Mammary epithelial cell (primary cell): ENCODE measurements at regions of chr19 and their contacts with region 1.

Region 1: GRCh38 chr19:55605637-55606470 is at the start of gene ZNF865:
- DNase-seq: peak; percentile 84
- H3K4me3 ChIP-seq: peak within 1 kb of the TSS; percentile 77 to 80 (median 80)
- H3K27ac ChIP-seq: peak within 1 kb of the TSS; percentile 69
- H3K4me1 ChIP-seq: peaks cover 17% of the 10 kb centered on the region
- H3K27me3 ChIP-seq: no peaks in the 10 kb centered on the region
- CTCF ChIP-seq: peak; percentile 72 to 88
- total RNA-seq, gene ZNF865: 1.5 to 8.8 TPM

Region 2: GRCh38 chr19:55467236-55468053 is 138.4 kb before region 1 on chr19:
- CTCF ChIA-PET with region 1: no interaction called
- dilution Hi-C with region 1: loop called (anchors 5 kb)
- in situ Hi-C with region 1: no loop called
- intact Hi-C with region 1: loop called (anchors 2 kb)
- DNase-seq: peak; percentile 38
- H3K4me3 ChIP-seq: no peak overlapping the region
- H3K27ac ChIP-seq: no peak overlapping the region
- H3K4me1 ChIP-seq: no peaks in the 10 kb centered on the region
- H3K27me3 ChIP-seq: no peaks in the 10 kb centered on the region
- CTCF ChIP-seq: peak; percentile 77 to 97

Region 3: GRCh38 chr19:55516878-55517620 is 88.8 kb before region 1 on chr19:
- CTCF ChIA-PET with region 1: no interaction called
- dilution Hi-C with region 1: no loop called
- in situ Hi-C with region 1: no loop called
- intact Hi-C with region 1: loop called (anchors 1 kb)
- DNase-seq: peak; percentile 82
- H3K4me3 ChIP-seq: peak overlapping the region; percentile 25 to 58 (median 27)
- H3K27ac ChIP-seq: no peak overlapping the region
- H3K4me1 ChIP-seq: no peaks in the 10 kb centered on the region
- H3K27me3 ChIP-seq: no peaks in the 10 kb centered on the region
- CTCF ChIP-seq: peak; percentile 63 to 97

Region 4: GRCh38 chr19:55674841-55675660 is 69.2 kb after region 1 on chr19 and contains the start of gene EPN1:
- CTCF ChIA-PET with region 1: no interaction called
- dilution Hi-C with region 1: no loop called
- in situ Hi-C with region 1: no loop called
- intact Hi-C with region 1: no loop called
- DNase-seq: peak; percentile 95
- H3K4me3 ChIP-seq: peak within 1 kb of the TSS; percentile 77 to 87 (median 78)
- H3K27ac ChIP-seq: peak within 1 kb of the TSS; percentile 69
- H3K4me1 ChIP-seq: peaks cover 31% of the 10 kb centered on the region
- H3K27me3 ChIP-seq: no peaks in the 10 kb centered on the region
- CTCF ChIP-seq: no peak
- total RNA-seq, gene EPN1: 47.0 to 135 TPM